Psoas muscle (tissue), 8 donors: ENCODE measurements at regions of chr1 and their contacts with region 1.

Region 1: GRCh38 chr1:114152508-114153260 is 985 bp downstream of the SYT6 start:
- DNase-seq: peak; percentile 59 to 72
- ATAC-seq: peak; percentile 69 to 83 (median 82)
- H3K4me3 ChIP-seq: peak overlapping the region; percentile 67
- H3K27ac ChIP-seq: no peak overlapping the region
- H3K4me1 ChIP-seq: peaks cover 20% of the 10 kb centered on the region
- H3K27me3 ChIP-seq: peaks cover 2 to 62% (median 44%) of the 10 kb centered on the region in 3 donors
- CTCF ChIP-seq: no peak

Region 2: DNA sequence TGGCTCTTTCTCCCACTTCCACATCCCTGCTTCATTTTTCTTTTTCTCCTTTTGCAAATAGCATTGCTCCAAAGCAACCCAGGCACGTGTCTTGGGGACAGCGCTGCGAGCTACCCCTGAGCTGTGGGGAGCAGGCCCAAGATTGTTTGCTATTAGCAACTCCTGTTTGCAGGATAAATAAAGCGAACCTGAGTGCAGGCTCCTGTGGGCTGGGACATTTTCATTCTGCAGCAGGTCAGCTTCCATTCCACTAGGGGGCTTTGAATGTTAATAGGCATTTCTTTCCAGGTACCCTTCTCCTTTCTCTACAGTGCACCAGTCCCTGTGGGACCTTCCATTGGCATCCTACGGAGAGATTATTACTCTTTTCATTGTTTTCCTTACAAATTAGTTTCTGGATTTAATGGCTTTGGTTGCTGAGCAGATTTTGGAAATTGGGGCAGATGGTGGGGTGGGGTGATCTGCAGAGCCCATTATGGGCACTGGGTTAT is 119.4 kb before region 1 on chr1:
- intact Hi-C with region 1: loop called in 1 of 2 experiments (anchors 10 kb)
- DNase-seq: no peak
- ATAC-seq: peak; percentile 34 to 64 (median 62)
- H3K4me3 ChIP-seq: no peak overlapping the region
- H3K27ac ChIP-seq: peak overlapping the region; percentile 76
- H3K4me1 ChIP-seq: peaks cover 16% of the 10 kb centered on the region
- H3K27me3 ChIP-seq: no peaks in the 10 kb centered on the region
- CTCF ChIP-seq: peak; percentile 41

Region 3: DNA sequence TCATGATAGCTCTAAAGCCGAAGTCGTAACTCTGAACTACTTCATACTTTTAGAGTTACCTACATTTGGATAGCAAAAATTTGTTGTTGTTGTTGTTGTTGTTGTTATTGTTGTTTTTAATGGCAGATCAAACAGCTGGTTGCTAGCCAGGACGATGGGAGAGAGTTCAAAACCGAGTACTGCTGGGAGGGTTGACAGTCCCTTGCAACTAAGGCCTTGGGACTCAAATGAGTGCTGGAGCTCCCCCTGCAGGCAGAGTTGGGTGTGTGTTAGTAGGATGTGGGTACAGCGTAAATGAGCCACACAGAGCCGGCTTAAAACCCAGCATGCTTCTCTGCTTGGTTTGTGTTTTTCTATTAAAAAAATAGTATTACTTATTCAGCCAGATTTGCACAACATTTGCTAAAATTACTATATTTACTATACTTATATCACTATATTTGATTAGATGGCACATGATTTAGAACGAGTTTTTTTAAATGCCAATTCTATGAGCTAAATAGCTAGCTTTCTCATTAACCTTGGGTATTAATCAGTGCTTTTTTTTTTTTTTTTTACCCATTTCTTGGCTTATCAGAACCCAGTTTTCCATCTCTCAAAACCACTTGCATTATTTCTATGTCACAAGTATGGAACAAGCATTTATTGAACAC is 130.2 kb after region 1 on chr1:
- intact Hi-C with region 1: loop called in 1 of 2 experiments (anchors 5 kb)
- DNase-seq: peak; percentile 88 to 94
- ATAC-seq: peak; percentile 95 to 100 (median 98)
- H3K4me3 ChIP-seq: no peak overlapping the region
- H3K27ac ChIP-seq: no peak overlapping the region
- H3K4me1 ChIP-seq: no peaks in the 10 kb centered on the region
- H3K27me3 ChIP-seq: no peaks in the 10 kb centered on the region
- CTCF ChIP-seq: peak; percentile 86

Region 4: DNA sequence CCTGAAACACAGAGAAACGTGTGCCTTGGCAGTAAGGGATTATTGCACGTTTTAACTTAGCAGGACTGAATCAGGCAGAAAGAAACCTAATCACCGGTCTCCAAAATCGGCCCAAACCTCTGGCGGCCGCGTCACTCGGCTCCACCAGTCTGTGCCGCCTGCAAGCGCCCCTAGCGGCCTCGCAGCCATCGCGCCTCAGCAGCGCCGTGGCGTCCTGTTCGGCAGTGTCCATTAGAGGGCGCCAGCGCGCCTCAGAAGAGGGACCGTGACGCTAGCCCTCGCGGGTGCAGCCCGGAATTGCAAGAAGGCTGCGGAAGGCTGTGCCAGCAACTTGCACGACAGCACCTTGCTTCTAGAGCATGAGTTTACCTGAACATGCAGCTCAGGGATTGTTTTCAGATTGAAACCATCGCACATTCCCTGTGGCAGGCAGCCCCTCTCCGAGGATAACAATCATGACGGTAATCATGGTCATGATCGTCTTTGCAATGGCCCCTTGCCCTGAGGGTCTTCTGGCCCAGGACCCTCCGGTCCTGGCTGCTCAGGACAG is 193.9 kb after region 1 on chr1:
- intact Hi-C with region 1: no loop called
- DNase-seq: peak; percentile 94 to 98
- ATAC-seq: peak; percentile 99 to 100 (median 100)
- H3K4me3 ChIP-seq: peak overlapping the region; percentile 71
- H3K27ac ChIP-seq: peak overlapping the region; percentile 54
- H3K4me1 ChIP-seq: peaks cover 9% of the 10 kb centered on the region
- H3K27me3 ChIP-seq: no peaks in the 10 kb centered on the region
- CTCF ChIP-seq: peak; percentile 100